Right cardiac atrium (tissue), 5 donors: ENCODE measurements at regions of chr15 and their contacts with region 1.

Region 1: GRCh38 chr15:72272213-72273002 is at the start of gene PARP6:
- DNase-seq: peak; percentile 100
- ATAC-seq: peak; percentile 99 to 100
- H3K4me3 ChIP-seq: peak within 1 kb of the TSS; percentile 65
- H3K27ac ChIP-seq: peak within 1 kb of the TSS; percentile 78
- H3K4me1 ChIP-seq: no peaks in the 10 kb centered on the region
- H3K27me3 ChIP-seq: no peaks in the 10 kb centered on the region
- total RNA-seq, gene PARP6: 39.7 to 53.6 (median 45.0) TPM

Region 2: DNA sequence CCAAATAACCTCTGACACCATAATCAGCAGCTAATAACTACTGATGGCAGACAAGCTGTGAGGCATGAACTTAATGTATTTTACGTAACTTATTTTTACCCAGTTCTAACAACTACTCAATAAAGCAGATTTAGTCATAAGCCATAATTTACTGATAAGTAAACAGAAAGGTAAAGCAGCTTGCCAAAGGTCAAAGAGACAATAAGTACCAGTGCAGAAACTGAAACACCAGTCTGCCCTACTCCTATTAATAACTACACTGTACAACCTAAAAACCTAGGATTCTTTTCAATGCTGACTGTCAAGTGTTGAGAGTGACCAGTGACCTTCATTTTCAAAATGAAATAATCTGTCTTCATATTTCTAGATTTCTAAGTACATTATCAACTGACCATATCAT is 309.9 kb before region 1 on chr15:
- intact Hi-C with region 1: no loop called
- DNase-seq: no peak
- ATAC-seq: no peak
- H3K4me3 ChIP-seq: no peak overlapping the region
- H3K27ac ChIP-seq: no peak overlapping the region
- H3K4me1 ChIP-seq: no peaks in the 10 kb centered on the region
- H3K27me3 ChIP-seq: no peaks in the 10 kb centered on the region

Region 3: DNA sequence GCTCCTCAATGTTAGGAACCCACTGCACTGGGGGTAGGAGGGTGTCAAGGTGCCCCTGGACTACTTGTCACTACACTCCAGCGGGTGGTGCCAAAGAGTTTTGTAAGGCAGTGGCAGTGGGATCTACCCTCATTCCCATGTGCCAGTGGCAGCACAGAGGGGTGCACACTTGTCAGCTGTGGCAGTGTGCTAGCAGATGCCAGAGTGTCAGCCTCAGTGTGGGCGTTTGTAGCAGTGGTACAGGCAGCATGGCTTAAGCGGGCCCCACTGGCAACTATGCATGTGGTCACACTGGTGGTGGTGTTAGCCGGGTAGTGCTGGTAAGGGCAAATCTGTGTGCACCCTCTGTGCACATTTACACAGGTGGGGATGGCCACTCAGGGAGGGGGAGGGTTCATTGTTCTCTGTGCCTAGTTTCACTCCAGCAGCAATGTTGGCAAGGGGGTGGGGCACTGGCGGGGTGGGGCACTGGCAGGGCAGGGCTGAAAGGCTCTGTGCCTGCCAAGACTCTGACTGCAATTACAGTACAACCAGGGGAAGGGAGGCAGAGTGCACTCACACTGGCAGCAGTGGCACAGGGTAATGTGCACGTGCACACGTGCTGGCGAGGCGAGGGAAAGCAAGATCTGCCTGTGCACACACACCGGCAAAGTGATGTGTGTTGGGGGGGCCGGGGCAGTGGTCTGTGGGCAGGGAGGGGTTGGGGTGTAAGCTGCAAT is 186.3 kb before region 1 on chr15:
- intact Hi-C with region 1: no loop called
- DNase-seq: peak in 1 of 3 donors; percentile 46
- ATAC-seq: peak; percentile 62 to 73
- H3K4me3 ChIP-seq: no peak overlapping the region
- H3K27ac ChIP-seq: no peak overlapping the region
- H3K4me1 ChIP-seq: no peaks in the 10 kb centered on the region
- H3K27me3 ChIP-seq: no peaks in the 10 kb centered on the region

Region 4: DNA sequence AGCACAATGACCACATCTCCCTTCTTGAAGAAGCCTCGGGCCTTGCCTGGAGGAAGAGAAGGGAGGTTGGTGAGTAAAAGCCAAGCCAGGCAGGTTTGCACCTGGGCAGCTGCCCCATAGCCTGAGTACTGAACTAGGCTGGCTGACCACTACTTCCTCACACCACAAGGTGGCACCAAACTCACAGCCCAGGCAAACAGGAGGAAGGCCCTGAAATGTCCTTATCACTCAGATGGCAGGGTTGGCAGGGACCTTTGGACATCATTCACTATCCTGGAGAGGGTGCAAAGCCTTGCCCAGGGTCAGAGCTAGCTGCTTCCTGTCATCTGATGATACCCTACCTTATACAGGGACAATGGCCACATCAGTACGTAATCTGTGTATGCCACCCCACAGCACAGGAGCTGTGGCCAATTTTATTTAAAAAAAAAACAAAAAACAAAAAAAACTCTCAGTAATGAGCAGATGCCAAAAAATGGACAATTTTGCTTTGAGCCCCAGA is 72.6 kb before region 1 on chr15:
- intact Hi-C with region 1: loop called in 2 of 4 experiments (anchors 5 to 10 kb)
- DNase-seq: peak; percentile 67 to 88 (median 81)
- ATAC-seq: peak; percentile 59 to 66
- H3K4me3 ChIP-seq: no peak overlapping the region
- H3K27ac ChIP-seq: peak overlapping the region; percentile 31
- H3K4me1 ChIP-seq: peaks cover 22% of the 10 kb centered on the region
- H3K27me3 ChIP-seq: no peaks in the 10 kb centered on the region

Region 5: GRCh38 chr15:72231066-72231846 is 41.2 kb before region 1 on chr15 and contains the start of gene PKM:
- intact Hi-C with region 1: loop called in 1 of 4 experiments (anchors 5 kb)
- DNase-seq: peak; percentile 97 to 99 (median 98)
- ATAC-seq: peak; percentile 93
- H3K4me3 ChIP-seq: peak within 1 kb of the TSS; percentile 85
- H3K27ac ChIP-seq: peak within 1 kb of the TSS; percentile 96
- H3K4me1 ChIP-seq: peaks cover 10% of the 10 kb centered on the region
- H3K27me3 ChIP-seq: no peaks in the 10 kb centered on the region
- total RNA-seq, gene PKM: 822 to 1,102 (median 1,021) TPM

Region 6: GRCh38 chr15:72365844-72366243 is 93.4 kb after region 1 on chr15:
- intact Hi-C with region 1: no loop called
- DNase-seq: no peak
- ATAC-seq: peak; percentile 35 to 62
- H3K4me3 ChIP-seq: no peak overlapping the region
- H3K27ac ChIP-seq: no peak overlapping the region
- H3K4me1 ChIP-seq: peaks cover 3% of the 10 kb centered on the region
- H3K27me3 ChIP-seq: no peaks in the 10 kb centered on the region